Tibial artery (tissue), 4 donors: ENCODE measurements at regions of chr12 and their contacts with region 1.

Region 1: GRCh38 chr12:52278541-52279421 is 4.3 kb downstream of the KRT86 start:
- DNase-seq: peak; percentile 67 to 86
- H3K4me3 ChIP-seq: peak overlapping the region; percentile 8 to 42
- H3K27ac ChIP-seq: peak overlapping the region; percentile 62 to 73
- H3K4me1 ChIP-seq: peaks cover 0 to 40% (median 32%) of the 10 kb centered on the region in 4 donors
- H3K27me3 ChIP-seq: no peaks in the 10 kb centered on the region
- CTCF ChIP-seq: peak; percentile 97 to 100

Region 2: DNA sequence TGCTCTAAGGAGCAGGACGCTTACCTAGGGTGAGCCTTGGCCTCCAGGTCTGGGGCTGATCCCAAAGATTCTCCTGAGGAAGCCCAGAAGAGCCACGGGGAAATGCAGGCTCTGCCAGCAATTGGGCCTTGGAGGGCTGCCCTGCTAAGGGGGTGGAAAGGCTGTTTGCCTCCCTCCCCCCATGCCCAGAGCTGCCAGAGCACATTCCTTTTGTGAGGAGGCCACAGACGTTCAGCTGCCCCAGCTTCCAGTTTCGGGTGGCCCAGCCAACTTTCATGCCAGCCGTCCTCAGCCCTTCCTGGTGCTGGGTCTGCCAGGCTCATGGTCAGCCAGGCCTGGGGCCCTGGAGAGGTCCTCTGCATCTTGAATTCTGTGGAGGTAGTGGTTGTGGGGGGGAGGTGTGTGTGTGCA is 29.7 kb before region 1 on chr12:
- intact Hi-C with region 1: loop called (anchors 2 kb)
- DNase-seq: peak; percentile 60 to 93
- H3K4me3 ChIP-seq: no peak overlapping the region
- H3K27ac ChIP-seq: peak overlapping the region; percentile 70 to 73
- H3K4me1 ChIP-seq: peaks cover 0 to 65% (median 54%) of the 10 kb centered on the region in 4 donors
- H3K27me3 ChIP-seq: no peaks in the 10 kb centered on the region
- CTCF ChIP-seq: no peak